Right ventricle myocardium inferior (tissue), 1 donor: ENCODE measurements at regions of chr14 and their contacts with region 1.

Region 1: GRCh38 chr14:67619446-67620216 is at the start of gene ARG2:
- DNase-seq: peak; percentile 99
- ATAC-seq: peak; percentile 98
- total RNA-seq, gene ARG2: 1.3 TPM

Region 2: GRCh38 chr14:67514203-67514607 is 105.4 kb before region 1 on chr14:
- intact Hi-C with region 1: no loop called
- DNase-seq: no peak
- ATAC-seq: no peak

Region 3: DNA sequence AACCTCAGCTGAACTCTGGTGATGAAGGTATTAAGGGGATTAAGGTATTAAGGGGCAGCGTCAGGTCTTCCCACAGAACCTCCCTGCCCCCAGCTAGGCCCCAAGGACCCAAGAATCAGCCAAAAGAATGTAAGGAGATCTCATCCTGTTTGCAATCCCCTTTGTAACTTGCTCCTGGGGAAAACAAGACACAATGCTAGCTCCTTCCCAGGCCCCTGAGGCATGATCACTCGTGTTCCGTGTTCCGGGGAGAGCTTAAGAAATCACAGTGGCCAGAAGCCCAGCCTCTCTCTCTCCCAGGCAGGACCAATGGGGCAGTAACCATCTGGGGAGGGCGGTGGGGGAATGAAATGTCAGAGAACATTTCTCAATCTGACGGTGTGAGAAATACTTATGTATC is 52.7 kb before region 1 on chr14:
- intact Hi-C with region 1: no loop called
- DNase-seq: no peak
- ATAC-seq: no peak

Region 4: GRCh38 chr14:67599698-67600561 is 19.7 kb before region 1 on chr14 and contains the start of gene PIGH:
- intact Hi-C with region 1: loop called (anchors 2 kb)
- DNase-seq: peak; percentile 96
- ATAC-seq: peak; percentile 100
- total RNA-seq, gene PIGH: 11.8 TPM

Region 5: GRCh38 chr14:67666750-67667449 is 47.3 kb after region 1 on chr14:
- intact Hi-C with region 1: loop called (anchors 2 kb)
- DNase-seq: no peak
- ATAC-seq: peak; percentile 64

Region 6: DNA sequence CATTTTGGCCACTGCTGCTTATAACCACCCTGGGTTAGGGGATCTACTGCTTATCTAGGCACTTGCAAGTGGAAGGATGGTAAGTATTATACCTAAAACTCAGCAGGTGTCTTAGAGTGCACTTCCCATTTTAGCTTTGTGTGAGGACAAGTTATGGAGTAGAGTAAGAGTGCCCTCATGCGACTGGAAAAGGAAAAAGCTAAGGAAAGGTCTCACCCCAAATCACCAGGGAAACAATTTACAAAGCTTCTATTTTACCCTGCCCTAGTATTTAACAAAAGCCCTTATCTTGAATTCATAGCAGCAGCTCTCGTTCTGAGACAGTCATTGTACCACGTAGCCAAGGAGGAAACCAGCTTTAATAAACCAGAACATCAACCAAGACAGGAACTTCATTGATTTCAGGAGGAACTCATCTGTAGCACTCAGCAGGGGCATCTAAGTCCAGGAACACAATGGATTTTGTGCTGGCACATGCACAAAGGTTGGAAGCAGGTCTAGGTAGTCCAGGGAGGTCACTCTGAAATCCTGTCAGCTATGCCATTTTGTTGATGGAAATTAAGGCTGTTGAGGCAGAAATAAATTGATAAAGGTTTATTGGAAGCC is 85.0 kb after region 1 on chr14:
- intact Hi-C with region 1: loop called (anchors 2 kb)
- DNase-seq: no peak
- ATAC-seq: peak; percentile 54